ENCODE measurements at regions of chr2 and their contacts with region 1.

Region 1: DNA sequence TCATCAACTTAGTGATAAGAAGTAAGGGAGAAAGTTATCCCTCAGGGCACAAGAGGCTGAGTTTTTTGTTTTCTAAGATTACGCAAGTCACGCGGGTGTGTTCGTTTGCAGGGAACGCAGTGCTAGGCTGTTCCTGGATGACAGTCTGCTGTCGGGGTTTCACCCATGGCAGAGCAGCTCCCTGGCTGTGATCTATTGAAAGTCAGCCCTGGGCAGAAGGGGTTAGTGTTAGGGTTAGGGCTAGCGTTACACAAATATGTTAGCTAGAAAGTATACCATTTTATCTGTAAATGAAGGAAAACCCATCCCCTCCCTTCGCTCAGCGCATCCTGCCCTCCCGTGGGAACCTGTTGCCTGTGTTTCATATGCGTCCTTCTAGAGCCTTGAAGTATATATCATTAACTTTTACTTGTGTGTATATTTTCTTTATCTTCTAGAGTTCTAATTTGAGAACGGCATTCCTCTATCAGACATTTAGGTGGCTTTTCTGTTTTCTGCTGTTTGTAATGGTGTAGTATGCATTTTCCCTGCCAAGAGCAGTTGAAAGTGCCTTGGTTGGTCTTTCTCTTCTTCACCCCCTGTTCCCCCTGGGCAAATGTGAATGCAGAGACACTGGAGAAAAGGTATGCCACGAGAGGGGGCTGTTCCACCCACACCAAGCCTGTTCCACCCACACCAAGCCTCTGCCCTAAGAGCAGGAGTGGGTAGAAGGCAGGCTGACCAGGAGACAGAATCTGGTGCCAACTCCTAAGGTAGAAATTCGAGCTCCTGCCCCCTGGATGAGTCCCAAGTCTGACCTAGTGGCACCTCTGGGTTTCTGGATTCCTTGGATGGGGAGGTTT is 47.0 kb downstream of the ARMC9 start:
- DNase-seq: no peak
- ATAC-seq: peak in 2 of 4 donors; percentile 36 to 46
- H3K4me3 ChIP-seq: no peak overlapping the region
- H3K27ac ChIP-seq: no peak overlapping the region
- H3K4me1 ChIP-seq: peaks cover 0 to 7% (median 0%) of the 10 kb centered on the region in 12 donors
- H3K27me3 ChIP-seq: no peaks in the 10 kb centered on the region
- CTCF ChIP-seq: peak in 8 of 12 donors; percentile 6 to 43 (median 21)
- POLR2A ChIP-seq: no peak

Region 2: GRCh38 chr2:231308631-231309428 is 63.4 kb after region 1 on chr2:
- intact Hi-C with region 1: no loop called
- DNase-seq: no peak
- ATAC-seq: peak in 1 of 4 donors; percentile 18
- H3K4me3 ChIP-seq: no peak overlapping the region
- H3K27ac ChIP-seq: no peak overlapping the region
- H3K4me1 ChIP-seq: peaks cover 0 to 12% (median 0%) of the 10 kb centered on the region in 12 donors
- H3K27me3 ChIP-seq: no peaks in the 10 kb centered on the region
- CTCF ChIP-seq: no peak
- POLR2A ChIP-seq: no peak

Region 3: DNA sequence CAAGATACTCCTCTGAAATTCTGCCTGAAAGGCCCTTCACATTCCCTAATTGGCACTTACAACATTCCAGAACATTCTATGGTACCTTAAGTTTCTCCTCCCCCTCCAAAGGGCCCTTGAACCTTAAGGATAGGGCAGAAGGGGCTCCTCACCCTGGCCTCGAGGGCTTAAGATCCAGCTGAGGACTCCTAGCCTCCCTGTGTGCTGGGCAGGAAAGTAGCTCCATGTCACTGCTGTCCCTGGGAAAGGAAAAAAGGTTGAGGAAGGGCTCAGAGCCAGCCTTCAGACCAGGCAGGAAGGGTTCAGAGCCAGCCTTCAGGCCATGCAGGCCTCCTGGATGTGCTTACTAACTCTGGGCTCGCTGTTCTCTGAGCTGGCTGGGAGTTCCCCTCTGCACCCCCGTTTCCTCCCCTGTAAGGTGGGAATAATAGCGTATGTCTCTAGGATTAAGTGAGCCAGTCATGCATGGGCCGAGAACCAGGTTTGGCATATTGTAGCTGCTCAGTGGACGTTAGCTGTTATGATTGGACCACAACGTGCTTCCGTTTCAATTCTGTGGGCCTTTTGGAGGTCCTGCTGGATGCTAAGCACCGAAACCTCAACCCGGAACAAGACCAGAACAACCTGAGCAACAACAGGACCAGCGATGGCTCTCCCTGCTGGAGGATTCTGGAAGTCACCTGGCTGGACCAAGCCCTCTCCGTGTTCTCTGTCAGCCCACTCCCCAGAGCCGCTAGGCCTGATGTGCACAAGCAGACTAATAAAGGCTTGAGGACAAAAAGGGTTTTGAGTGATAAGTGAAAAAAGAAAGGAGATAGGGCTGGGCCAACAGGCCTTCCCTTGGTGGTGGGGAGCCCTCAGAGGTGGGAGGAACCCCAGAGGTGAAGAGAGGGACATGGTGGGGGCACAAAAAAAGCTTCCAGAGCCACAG is 149.0 kb after region 1 on chr2:
- intact Hi-C with region 1: loop called in 1 of 10 experiments (anchors 5 kb)
- DNase-seq: no peak
- ATAC-seq: no peak
- H3K4me3 ChIP-seq: peak overlapping the region in 1 of 12 donors; percentile 57
- H3K27ac ChIP-seq: no peak overlapping the region
- H3K4me1 ChIP-seq: peaks cover 0 to 26% (median 4%) of the 10 kb centered on the region in 12 donors
- H3K27me3 ChIP-seq: peaks cover 0 to 23% (median 5%) of the 10 kb centered on the region in 9 donors
- CTCF ChIP-seq: peak in 2 of 12 donors; percentile 13 to 20
- POLR2A ChIP-seq: no peak

Region 4: DNA sequence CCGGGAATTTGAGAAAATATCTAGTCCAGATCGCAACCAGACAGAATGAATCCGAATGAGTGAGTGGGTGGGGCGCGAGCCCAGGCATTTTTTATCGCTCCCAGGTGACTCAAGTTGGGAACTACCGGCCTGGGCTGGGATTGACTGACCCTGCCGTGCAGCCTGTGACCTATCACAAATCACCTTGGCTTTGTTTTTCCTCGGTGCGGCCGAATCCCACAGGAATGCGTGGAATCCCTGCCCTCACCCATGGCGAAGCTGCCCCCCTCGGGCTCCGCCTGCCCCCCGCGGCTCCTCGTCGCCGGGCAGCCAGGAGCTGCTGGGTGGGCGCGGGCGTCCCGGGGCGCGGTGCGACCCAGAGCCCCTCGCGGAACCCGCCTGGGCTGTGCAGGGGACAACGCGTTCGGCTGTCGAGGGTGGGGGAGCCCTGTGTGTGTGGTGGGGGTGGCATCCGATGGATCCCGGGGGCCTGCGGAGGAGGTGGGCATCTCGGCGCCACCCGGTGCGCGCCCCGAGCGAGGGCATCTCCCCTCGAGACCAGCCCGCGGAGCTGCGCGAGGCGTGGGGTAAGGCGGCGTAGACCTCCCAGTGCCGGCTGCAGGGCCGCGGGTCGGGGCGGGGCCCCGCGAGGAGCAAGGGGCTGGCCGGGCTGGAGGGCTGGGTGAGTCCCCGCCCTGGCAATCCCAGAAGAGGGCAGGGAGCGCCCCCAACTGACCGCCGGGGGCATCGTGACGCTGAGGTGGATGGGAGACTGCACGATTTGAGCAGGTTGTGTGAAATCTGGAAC is 166.6 kb after region 1 on chr2:
- intact Hi-C with region 1: loop called in 1 of 10 experiments (anchors 5 kb)
- DNase-seq: peak; percentile 78 to 91 (median 85)
- ATAC-seq: peak; percentile 81 to 100 (median 99)
- H3K4me3 ChIP-seq: peak overlapping the region; percentile 29 to 79 (median 64)
- H3K27ac ChIP-seq: peak overlapping the region in 2 of 12 donors; percentile 10 to 33
- H3K4me1 ChIP-seq: peaks cover 0 to 16% (median 9%) of the 10 kb centered on the region in 12 donors
- H3K27me3 ChIP-seq: peaks cover 0 to 14% (median 4%) of the 10 kb centered on the region in 9 donors
- CTCF ChIP-seq: peak; percentile 67 to 96 (median 86)
- POLR2A ChIP-seq: no peak

Measured in heart left ventricle (tissue), 16 donors.